ENCODE measurements at regions of chr6 and their contacts with region 1.

Region 1: GRCh38 chr6:17599885-17600526 is at the start of gene FAM8A1:
- DNase-seq: peak; percentile 56
- H3K4me3 ChIP-seq: peak within 1 kb of the TSS; percentile 82
- CTCF ChIP-seq: peak; percentile 65

Region 2: GRCh38 chr6:17167327-17167979 is 432.6 kb before region 1 on chr6:
- in situ Hi-C with region 1: loop called (anchors 10 kb)
- DNase-seq: no peak
- H3K4me3 ChIP-seq: no peak overlapping the region
- CTCF ChIP-seq: peak; percentile 62